ENCODE measurements at regions of chr22 and their contacts with region 1.

Region 1: DNA sequence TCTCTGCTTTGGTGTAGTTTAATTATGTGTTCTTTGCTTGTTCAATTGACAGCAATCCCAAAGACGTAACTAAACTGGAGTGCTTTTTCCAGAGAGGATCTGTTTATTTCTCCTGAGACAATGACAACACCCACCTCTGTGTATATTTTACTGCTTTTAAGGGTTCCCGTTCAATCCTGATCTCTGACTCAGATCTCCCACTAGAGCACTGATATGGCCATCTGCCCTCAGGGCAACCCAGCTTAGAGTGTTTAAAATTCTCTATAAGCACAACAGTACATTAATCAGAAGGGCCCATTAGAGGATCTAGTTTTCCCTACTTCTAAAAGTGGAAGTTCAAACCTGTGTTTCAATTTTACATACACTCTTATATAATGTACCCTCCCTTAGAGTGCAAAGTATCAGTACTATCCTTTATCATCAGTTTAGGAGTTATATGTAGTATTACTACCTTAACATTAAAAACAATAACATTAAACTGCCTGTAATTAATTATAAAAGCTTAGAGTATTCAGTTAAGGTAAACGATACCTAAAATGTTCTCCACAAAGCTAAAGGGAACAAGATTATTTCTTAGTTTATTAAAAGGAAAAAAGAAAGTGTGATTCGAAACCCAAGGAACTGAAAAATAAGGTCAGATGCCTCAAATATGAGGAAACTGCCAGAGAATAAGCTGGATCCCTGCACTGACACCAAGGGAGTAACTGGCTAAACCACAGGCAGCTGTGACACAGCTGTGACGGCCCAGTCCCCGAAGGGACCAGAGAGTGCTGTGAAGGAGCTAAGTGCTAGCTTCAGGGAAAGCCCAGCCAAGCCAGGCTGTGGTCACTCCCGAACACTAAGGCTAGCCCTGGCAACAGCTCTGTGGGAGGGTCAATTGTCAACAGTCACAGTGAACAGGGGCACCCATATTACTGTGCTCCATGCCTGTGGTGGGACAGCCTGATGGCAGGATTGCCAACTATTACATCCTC is 15.2 kb downstream of the UFD1 start:
- DNase-seq: no peak
- ATAC-seq: no peak
- H3K4me3 ChIP-seq: no peak overlapping the region
- H3K4me3 Mint-ChIP-seq: no peak overlapping the region
- H3K27ac ChIP-seq: no peak overlapping the region
- H3K27ac Mint-ChIP-seq: no peak overlapping the region
- H3K4me1 ChIP-seq: no peaks in the 10 kb centered on the region
- H3K4me1 Mint-ChIP-seq: no peaks in the 10 kb centered on the region
- H3K27me3 ChIP-seq: no peaks in the 10 kb centered on the region
- H3K27me3 Mint-ChIP-seq: no peaks in the 10 kb centered on the region
- CTCF ChIP-seq: no peak

Region 2: GRCh38 chr22:19407649-19408606 is 55.9 kb before region 1 on chr22:
- CTCF ChIA-PET with region 1: no interaction called
- POLR2A ChIA-PET with region 1: no interaction called
- intact Hi-C with region 1: loop called in 1 of 2 experiments (anchors 5 kb)
- DNase-seq: no peak
- ATAC-seq: no peak
- H3K4me3 ChIP-seq: no peak overlapping the region
- H3K4me3 Mint-ChIP-seq: no peak overlapping the region
- H3K27ac ChIP-seq: no peak overlapping the region
- H3K27ac Mint-ChIP-seq: no peak overlapping the region
- H3K4me1 ChIP-seq: no peaks in the 10 kb centered on the region
- H3K4me1 Mint-ChIP-seq: peaks cover 15% of the 10 kb centered on the region
- H3K27me3 ChIP-seq: no peaks in the 10 kb centered on the region
- H3K27me3 Mint-ChIP-seq: no peaks in the 10 kb centered on the region
- CTCF ChIP-seq: no peak

Measured in CD8-positive, alpha-beta T cell (primary cell).